ENCODE measurements at regions of chr1 and their contacts with region 1.

Region 1: GRCh38 chr1:150922519-150922975 is 3.6 kb upstream of the SETDB1 start:
- DNase-seq: peak; percentile 80 to 85
- ATAC-seq: peak; percentile 74 to 79
- H3K4me3 ChIP-seq: no peak overlapping the region
- H3K27ac ChIP-seq: peak overlapping the region in 1 of 2 experiments; percentile 26; a peak in 1 of 6 replicates
- H3K4me1 ChIP-seq: peaks cover 15% of the 10 kb centered on the region; the same call in 2 of the 3 replicates
- CTCF ChIP-seq: peak; percentile 80
- EP300 ChIP-seq: no peak
- POLR2A ChIP-seq: no peak
- RAD21 ChIP-seq: peak; percentile 73 to 75

Region 2: GRCh38 chr1:150813058-150813707 is 109.4 kb before region 1 on chr1:
- CTCF ChIA-PET with region 1: interaction called, 17 read pairs
- POLR2A ChIA-PET with region 1: no interaction called
- DNase-seq: peak; percentile 69 to 75
- ATAC-seq: peak; percentile 97 to 98
- H3K4me3 ChIP-seq: no peak overlapping the region
- H3K27ac ChIP-seq: no peak overlapping the region
- H3K4me1 ChIP-seq: no peaks in the 10 kb centered on the region
- CTCF ChIP-seq: peak; percentile 76
- EP300 ChIP-seq: no peak
- POLR2A ChIP-seq: no peak
- RAD21 ChIP-seq: peak; percentile 84 to 90

Region 3: GRCh38 chr1:150863724-150864123 is 58.8 kb before region 1 on chr1:
- CTCF ChIA-PET with region 1: interaction called, 12 read pairs
- POLR2A ChIA-PET with region 1: no interaction called
- DNase-seq: no peak
- ATAC-seq: no peak
- H3K4me3 ChIP-seq: no peak overlapping the region
- H3K27ac ChIP-seq: no peak overlapping the region
- H3K4me1 ChIP-seq: no peaks in the 10 kb centered on the region
- CTCF ChIP-seq: no peak
- EP300 ChIP-seq: no peak
- POLR2A ChIP-seq: no peak
- RAD21 ChIP-seq: no peak

Region 4: GRCh38 chr1:150876119-150876454 is 46.5 kb before region 1 on chr1:
- CTCF ChIA-PET with region 1: interaction called, 41 read pairs
- POLR2A ChIA-PET with region 1: interaction called, 6 read pairs
- DNase-seq: peak in 1 of 2 experiments; percentile 42
- ATAC-seq: peak; percentile 80 to 82
- H3K4me3 ChIP-seq: peak overlapping the region; percentile 82
- H3K27ac ChIP-seq: peak overlapping the region; percentile 93 to 97
- H3K4me1 ChIP-seq: peaks cover 24% of the 10 kb centered on the region
- CTCF ChIP-seq: no peak
- EP300 ChIP-seq: no peak
- POLR2A ChIP-seq: no peak
- RAD21 ChIP-seq: no peak

Region 5: GRCh38 chr1:150895601-150896000 is 26.9 kb before region 1 on chr1:
- CTCF ChIA-PET with region 1: interaction called, 15 read pairs
- POLR2A ChIA-PET with region 1: no interaction called
- DNase-seq: peak; percentile 56 to 61
- ATAC-seq: peak; percentile 92 to 100
- H3K4me3 ChIP-seq: no peak overlapping the region
- H3K27ac ChIP-seq: peak overlapping the region in 1 of 2 experiments; percentile 15; a peak in 1 of 6 replicates
- H3K4me1 ChIP-seq: peaks cover 9% of the 10 kb centered on the region
- CTCF ChIP-seq: no peak
- EP300 ChIP-seq: no peak
- POLR2A ChIP-seq: no peak
- RAD21 ChIP-seq: no peak

Measured in A549 (cell line).